Natural killer cell (primary cell): ENCODE measurements at regions of chr10 and their contacts with region 1.

Region 1: DNA sequence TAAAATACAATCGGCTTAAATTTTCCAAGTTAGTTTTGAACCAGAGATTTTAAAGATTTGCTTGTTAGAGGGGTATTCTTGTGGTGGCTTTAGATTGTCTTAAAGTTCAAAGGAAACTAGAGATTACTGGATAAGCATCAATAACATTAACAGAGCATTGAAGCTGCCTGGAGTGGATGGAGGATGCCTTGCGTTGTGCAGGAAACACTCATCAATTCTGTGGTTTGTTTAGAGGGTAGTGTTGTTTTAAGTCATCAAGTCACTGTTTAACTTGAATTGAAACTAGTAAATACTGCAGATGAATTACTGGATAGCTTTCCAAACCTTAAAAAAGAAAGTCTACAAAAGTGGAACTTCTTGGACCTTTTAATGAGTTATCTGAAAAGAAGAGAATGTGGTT is 218.6 kb downstream of the CELF2 start:
- DNase-seq: peak in 1 of 2 donors; percentile 70
- ATAC-seq: peak in 2 of 3 donors; percentile 10 to 20
- H3K4me3 ChIP-seq: no peak overlapping the region
- H3K4me3 Mint-ChIP-seq: peak overlapping the region; percentile 71
- H3K27ac ChIP-seq: peak overlapping the region; percentile 80
- H3K27ac Mint-ChIP-seq: no peak overlapping the region
- H3K4me1 ChIP-seq: peaks cover 58% of the 10 kb centered on the region
- H3K4me1 Mint-ChIP-seq: peaks cover 67 to 89% of the 10 kb centered on the region in 2 donors
- H3K27me3 ChIP-seq: no peaks in the 10 kb centered on the region
- H3K27me3 Mint-ChIP-seq: no peaks in the 10 kb centered on the region
- CTCF ChIP-seq: no peak

Region 2: GRCh38 chr10:11225935-11226334 is 10.3 kb before region 1 on chr10:
- intact Hi-C with region 1: loop called (anchors 1 kb)
- DNase-seq: peak; percentile 60 to 82
- ATAC-seq: peak; percentile 64 to 76 (median 67)
- H3K4me3 ChIP-seq: no peak overlapping the region
- H3K4me3 Mint-ChIP-seq: peak overlapping the region; percentile 63
- H3K27ac ChIP-seq: peak overlapping the region; percentile 76
- H3K27ac Mint-ChIP-seq: no peak overlapping the region
- H3K4me1 ChIP-seq: peaks cover 76% of the 10 kb centered on the region
- H3K4me1 Mint-ChIP-seq: peaks cover 97 to 99% of the 10 kb centered on the region in 2 donors
- H3K27me3 ChIP-seq: no peaks in the 10 kb centered on the region
- H3K27me3 Mint-ChIP-seq: no peaks in the 10 kb centered on the region
- CTCF ChIP-seq: no peak

Region 3: DNA sequence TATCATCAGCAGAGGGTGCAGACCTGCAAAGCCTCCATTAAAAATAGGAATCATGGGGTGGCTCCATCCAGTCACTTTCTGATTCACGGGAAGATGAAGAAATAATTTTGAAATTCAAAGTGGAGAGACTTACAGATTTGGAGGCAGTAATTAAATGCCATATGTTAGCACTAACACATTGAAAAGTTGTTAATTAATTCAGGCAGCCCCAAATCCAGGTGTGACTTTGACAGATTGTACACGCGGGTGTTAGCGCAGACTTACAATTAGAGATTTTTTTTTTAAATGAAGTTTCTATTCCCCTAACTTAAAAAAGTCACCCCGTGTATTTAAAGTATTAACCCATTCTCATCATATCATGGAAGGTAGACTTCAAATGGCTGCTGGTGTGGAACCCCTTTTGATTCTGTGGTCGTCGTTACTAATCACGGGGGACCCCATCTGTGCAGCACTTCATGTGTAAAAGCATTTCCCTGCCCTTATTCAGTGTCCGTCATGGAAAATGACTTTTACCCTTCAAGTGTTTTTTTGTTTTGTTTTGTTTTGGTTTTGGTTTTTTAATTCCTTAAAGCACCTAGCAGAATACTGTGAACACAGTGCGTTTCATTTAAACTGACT is 17.3 kb after region 1 on chr10:
- intact Hi-C with region 1: loop called (anchors 2 kb)
- DNase-seq: no peak
- ATAC-seq: peak; percentile 41 to 59 (median 59)
- H3K4me3 ChIP-seq: no peak overlapping the region
- H3K4me3 Mint-ChIP-seq: peak overlapping the region; percentile 21
- H3K27ac ChIP-seq: peak overlapping the region; percentile 12
- H3K27ac Mint-ChIP-seq: peak overlapping the region in 1 of 2 donors; percentile 78
- H3K4me1 ChIP-seq: peaks cover 42% of the 10 kb centered on the region
- H3K4me1 Mint-ChIP-seq: peaks cover 78 to 82% of the 10 kb centered on the region in 2 donors
- H3K27me3 ChIP-seq: no peaks in the 10 kb centered on the region
- H3K27me3 Mint-ChIP-seq: no peaks in the 10 kb centered on the region
- CTCF ChIP-seq: no peak

Region 4: GRCh38 chr10:11468126-11468742 is 232.0 kb after region 1 on chr10:
- intact Hi-C with region 1: no loop called
- DNase-seq: no peak
- ATAC-seq: no peak
- H3K4me3 ChIP-seq: no peak overlapping the region
- H3K4me3 Mint-ChIP-seq: no peak overlapping the region
- H3K27ac ChIP-seq: no peak overlapping the region
- H3K27ac Mint-ChIP-seq: no peak overlapping the region
- H3K4me1 ChIP-seq: no peaks in the 10 kb centered on the region
- H3K4me1 Mint-ChIP-seq: no peaks in the 10 kb centered on the region
- H3K27me3 ChIP-seq: no peaks in the 10 kb centered on the region
- H3K27me3 Mint-ChIP-seq: no peaks in the 10 kb centered on the region
- CTCF ChIP-seq: no peak